IMR-90 (cell line): ENCODE measurements at regions of chr6 and their contacts with region 1.

Region 1: GRCh38 chr6:155001482-155001881 is 6.4 kb downstream of the TIAM2 start:
- DNase-seq: peak; percentile 47
- ATAC-seq: peak; percentile 42
- H3K4me3 ChIP-seq: no peak overlapping the region
- H3K27ac ChIP-seq: no peak overlapping the region
- H3K4me1 ChIP-seq: no peaks in the 10 kb centered on the region; the same call in 1 of the 2 replicates
- H3K27me3 ChIP-seq: no peaks in the 10 kb centered on the region
- CTCF ChIP-seq: no peak
- POLR2A ChIP-seq: no peak
- RAD21 ChIP-seq: no peak

Region 2: DNA sequence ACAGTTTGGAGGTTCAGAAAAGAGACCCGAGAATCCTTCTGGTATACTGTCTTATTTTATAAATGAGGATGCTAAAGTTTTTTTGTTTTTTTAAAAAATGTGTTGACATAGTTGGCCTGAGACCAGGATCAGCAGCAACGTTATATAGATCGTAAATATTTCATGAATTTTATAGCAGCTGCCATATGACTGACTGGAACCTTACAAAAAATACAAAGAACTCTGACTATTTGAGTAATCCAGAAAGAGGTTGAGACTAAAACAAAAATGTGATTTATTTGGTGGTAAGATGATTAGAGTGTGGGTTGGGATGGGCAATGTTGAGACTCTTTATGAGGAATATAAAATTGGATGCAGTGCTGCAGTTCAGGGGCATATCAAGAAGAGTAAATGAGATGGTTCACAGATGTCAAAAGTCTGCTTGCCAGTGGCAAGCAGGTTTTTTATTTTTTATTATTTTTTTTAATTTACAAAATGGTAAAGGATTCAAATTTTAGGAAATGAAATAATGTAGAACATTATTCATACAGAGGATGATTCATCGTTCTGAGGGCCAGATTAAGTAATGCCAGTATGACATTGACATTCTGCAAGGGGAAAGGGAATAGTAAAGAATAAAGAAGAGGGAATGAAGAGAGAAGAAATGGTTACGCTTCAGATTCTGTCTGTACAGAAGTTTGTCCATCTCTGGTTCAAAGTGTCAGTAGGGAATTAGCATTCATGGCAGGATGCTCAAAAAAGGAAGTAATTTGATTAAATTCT is 209.7 kb before region 1 on chr6:
- CTCF ChIA-PET with region 1: no interaction called
- POLR2A ChIA-PET with region 1: no interaction called
- dilution Hi-C with region 1: no loop called
- in situ Hi-C with region 1: no loop called
- intact Hi-C with region 1: no loop called
- DNase-seq: peak; percentile 21
- ATAC-seq: peak; percentile 29
- H3K4me3 ChIP-seq: no peak overlapping the region
- H3K27ac ChIP-seq: no peak overlapping the region
- H3K4me1 ChIP-seq: peaks cover 2% of the 10 kb centered on the region; the same call in 1 of the 2 replicates
- H3K27me3 ChIP-seq: no peaks in the 10 kb centered on the region
- CTCF ChIP-seq: no peak
- POLR2A ChIP-seq: no peak
- RAD21 ChIP-seq: no peak

Region 3: DNA sequence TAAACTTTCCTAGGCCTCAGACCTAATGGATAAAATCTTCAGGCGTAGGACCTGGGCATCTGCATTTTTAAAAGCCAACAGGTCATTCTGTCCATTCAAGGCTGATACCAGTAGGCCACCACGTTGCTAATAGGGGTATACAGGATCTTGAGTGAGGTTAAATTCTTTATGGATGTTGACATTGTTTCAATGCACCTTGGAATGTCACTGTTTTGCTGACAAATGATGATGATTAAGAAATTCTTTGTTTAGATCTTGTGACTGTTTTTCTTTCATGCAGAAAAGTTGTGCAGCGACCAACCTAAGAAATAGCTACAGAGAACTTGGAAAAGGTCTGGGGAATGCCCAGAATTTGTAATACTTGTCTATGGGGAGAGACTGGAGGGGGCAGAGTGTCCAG is 161.2 kb after region 1 on chr6:
- CTCF ChIA-PET with region 1: no interaction called
- POLR2A ChIA-PET with region 1: no interaction called
- dilution Hi-C with region 1: no loop called
- in situ Hi-C with region 1: loop called (anchors 10 kb)
- intact Hi-C with region 1: no loop called
- DNase-seq: peak; percentile 59
- ATAC-seq: peak; percentile 24; the same call in 1 of the 2 replicates
- H3K4me3 ChIP-seq: no peak overlapping the region
- H3K27ac ChIP-seq: no peak overlapping the region
- H3K4me1 ChIP-seq: peaks cover 4% of the 10 kb centered on the region; the same call in 1 of the 2 replicates
- H3K27me3 ChIP-seq: no peaks in the 10 kb centered on the region
- CTCF ChIP-seq: no peak
- POLR2A ChIP-seq: no peak
- RAD21 ChIP-seq: no peak